BJ (cell line): ENCODE measurements at regions of chr10 and their contacts with region 1.

Region 1: DNA sequence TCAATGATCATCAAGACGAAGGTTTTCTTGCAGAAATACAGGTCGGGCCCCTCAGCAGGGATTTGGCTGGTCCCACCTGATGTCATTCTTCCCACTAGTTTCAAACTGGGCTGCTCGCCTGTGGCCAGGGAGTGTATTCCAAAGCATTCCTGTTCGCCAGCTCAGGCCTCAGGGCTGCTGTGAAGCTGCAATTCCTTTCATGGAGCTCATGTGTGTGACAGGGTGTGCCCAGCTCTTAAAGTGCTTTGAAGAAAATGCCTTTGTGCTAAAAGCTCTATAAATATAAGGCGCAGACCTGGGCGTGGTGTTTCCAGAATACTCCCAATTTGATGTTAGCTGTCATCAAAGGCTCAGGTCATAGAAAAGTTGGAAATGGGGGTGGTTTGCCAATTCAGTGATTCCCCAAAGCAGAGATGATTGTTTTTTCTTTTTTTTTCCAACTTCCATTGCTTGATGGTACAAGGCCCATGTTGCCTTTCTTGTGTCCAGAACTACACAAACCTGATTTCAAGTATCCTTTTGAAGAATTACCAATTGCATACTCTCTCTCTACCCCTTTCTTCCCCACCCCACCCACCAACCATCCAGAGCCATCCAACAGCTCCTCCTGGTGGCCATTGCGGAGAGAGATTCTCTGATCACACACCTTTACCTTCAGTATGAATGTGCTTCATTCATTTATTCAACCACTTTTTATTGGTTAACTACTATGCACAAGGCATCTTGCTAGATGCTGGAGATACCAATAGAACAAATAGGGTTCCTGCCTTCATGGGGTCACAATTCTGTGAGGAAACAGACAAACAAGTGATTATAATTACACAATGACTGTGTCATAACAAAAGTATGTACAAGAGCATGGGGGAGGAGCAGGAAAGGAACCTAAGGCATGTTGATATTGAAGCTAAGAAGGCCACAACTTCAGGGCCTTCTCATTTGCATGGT is 297.3 kb upstream of the LYZL1 start:
- DNase-seq: peak; percentile 60
- H3K4me3 ChIP-seq: no peak overlapping the region
- H3K27me3 ChIP-seq: no peaks in the 10 kb centered on the region
- CTCF ChIP-seq: peak; percentile 64

Region 2: DNA sequence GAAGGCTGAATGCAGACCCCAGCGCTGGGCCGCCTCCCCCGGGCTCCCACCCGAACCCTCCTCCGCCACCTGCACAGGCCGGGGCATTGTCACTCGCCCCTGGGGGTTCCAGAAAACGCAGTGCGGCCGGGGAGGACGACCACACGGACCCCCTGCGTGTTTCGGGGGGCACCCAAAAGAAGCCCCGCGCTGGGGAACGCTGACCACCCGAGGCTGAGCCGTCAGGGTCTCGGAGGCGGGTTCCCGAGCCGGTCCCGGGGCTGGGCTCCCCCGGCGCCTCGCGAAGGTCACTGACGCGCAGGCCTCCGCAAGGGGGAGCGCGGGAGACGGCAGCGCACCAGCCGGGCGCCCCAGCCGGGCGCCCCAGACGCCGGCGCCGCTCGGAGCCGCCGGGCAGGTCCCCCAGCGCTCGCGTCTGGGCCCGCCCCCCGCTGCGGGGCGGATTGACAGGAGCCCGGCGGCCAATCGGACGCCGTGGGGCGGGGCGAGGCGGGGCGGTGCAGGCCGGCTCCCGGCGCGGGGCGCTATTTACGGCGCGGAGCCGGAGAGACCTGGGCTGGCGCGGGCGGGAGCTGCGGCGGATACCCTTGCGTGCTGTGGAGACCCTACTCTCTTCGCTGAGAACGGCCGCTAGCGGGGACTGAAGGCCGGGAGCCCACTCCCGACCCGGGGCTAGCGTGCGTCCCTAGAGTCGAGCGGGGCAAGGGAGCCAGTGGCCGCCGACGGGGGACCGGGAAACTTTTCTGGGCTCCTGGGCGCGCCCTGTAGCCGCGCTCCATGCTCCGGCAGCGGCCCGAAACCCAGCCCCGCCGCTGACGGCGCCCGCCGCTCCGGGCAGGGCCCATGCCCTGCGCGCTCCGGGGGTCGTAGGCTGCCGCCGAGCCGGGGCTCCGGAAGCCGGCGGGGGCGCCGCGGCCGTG is 314.4 kb before region 1 on chr10 and contains the start of gene BAMBI:
- CTCF ChIA-PET with region 1: interaction called, 22 read pairs
- POLR2A ChIA-PET with region 1: interaction called, 4 read pairs
- DNase-seq: no peak
- H3K4me3 ChIP-seq: peak within 1 kb of the TSS; percentile 86
- H3K27me3 ChIP-seq: peaks cover 20% of the 10 kb centered on the region
- CTCF ChIP-seq: peak; percentile 47
- polyA plus RNA-seq, gene BAMBI: 5.1 and 6.0 TPM in 2 replicates

Region 3: GRCh38 chr10:29022473-29022872 is 30.9 kb after region 1 on chr10:
- CTCF ChIA-PET with region 1: interaction called, 18 read pairs
- POLR2A ChIA-PET with region 1: no interaction called
- DNase-seq: no peak
- H3K4me3 ChIP-seq: no peak overlapping the region
- H3K27me3 ChIP-seq: peaks cover 2% of the 10 kb centered on the region; the same call in 1 of the 2 replicates
- CTCF ChIP-seq: no peak

Region 4: GRCh38 chr10:29239569-29240472 is 248.2 kb after region 1 on chr10:
- CTCF ChIA-PET with region 1: no interaction called
- POLR2A ChIA-PET with region 1: no interaction called
- DNase-seq: no peak
- H3K4me3 ChIP-seq: no peak overlapping the region
- H3K27me3 ChIP-seq: peaks cover 9% of the 10 kb centered on the region
- CTCF ChIP-seq: peak; percentile 53

Region 5: GRCh38 chr10:29285624-29286051 is 294.0 kb after region 1 on chr10:
- CTCF ChIA-PET with region 1: no interaction called
- POLR2A ChIA-PET with region 1: no interaction called
- DNase-seq: no peak
- H3K4me3 ChIP-seq: no peak overlapping the region
- H3K27me3 ChIP-seq: peaks cover 10% of the 10 kb centered on the region
- CTCF ChIP-seq: no peak